Activated T-helper 1 cell treated with anti-CD3 and anti-CD28 coated beads, Interleukin-12 subunit alpha, Interleukin-12 subunit beta, Interleukin-2, Interleukin-4 antibody, amounts not matched to agents 30 ng/mL and 10 ng/mL and 1 ng/mL, durations not matched to agents 14 hours and 24 hours and 36 hours (primary cell): ENCODE measurements at regions of chr16 and their contacts with region 1.

Region 1: DNA sequence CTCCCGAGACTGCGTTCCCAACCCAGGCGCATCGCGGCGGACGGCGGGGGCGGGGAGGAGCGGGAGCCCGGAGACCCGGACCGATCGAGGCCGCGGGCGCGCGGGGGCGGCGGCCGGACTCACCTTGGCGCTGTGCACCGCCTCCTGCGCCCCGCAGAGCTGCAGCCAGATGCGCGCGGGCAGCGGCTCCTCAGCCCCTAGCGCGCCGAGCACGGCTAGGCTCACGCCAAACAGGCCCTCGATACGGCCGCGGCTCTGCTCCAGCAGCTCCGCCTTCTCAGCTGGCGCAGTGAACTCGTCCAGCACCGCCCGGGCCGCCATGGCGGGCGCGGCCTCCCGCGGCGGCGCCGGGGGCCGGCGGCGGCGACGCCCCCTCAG is 339 bp downstream of the N4BP1 start:
- DNase-seq: no peak
- H3K4me3 Mint-ChIP-seq: no peak overlapping the region
- H3K27ac Mint-ChIP-seq: peak overlapping the region; percentile 93
- H3K4me1 Mint-ChIP-seq: peaks cover 50% of the 10 kb centered on the region
- H3K27me3 Mint-ChIP-seq: no peaks in the 10 kb centered on the region

Region 2: DNA sequence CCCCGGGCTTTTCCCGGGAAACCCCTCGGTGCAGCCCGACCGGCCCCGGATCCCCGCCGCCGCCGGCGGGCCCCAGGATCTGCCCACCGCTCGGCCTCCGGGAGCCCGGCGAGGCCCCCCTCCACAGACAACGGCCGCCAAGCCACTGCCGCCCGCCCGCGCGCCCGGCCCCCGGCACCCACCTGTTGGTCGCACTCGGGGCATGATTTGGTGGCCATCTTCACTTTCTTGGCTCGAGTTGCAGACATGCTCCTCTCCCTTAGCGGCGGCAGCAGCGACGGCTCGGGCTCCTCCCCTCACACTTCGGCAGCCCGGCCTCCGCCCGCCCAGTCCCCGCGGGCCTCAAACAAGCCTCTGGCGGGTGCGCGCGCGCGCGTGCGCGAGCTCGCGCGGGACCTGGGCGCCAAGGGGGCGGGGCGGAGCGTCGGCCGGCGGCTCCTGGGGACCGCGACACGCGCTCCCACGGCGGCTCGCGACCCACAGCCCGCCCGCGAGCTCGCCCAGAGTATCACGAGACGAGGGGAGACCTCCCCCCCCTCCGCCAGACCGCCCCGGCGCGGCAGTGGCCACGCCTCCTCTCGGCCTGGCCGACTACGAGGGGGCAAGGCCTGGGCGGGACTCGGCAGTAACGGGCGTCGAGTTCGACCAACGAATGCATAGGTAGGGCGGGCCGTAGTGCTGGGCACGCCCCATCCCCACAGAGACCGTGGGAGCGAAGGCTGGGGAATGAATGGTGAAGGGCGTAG is 1778.6 kb before region 1 on chr16 and contains the start of gene C16orf87:
- intact Hi-C with region 1: loop called (anchors 2 kb)
- DNase-seq: peak; percentile 90
- H3K4me3 Mint-ChIP-seq: peak within 1 kb of the TSS; percentile 97
- H3K27ac Mint-ChIP-seq: peak within 1 kb of the TSS; percentile 98
- H3K4me1 Mint-ChIP-seq: peaks cover 40% of the 10 kb centered on the region
- H3K27me3 Mint-ChIP-seq: peaks cover 10% of the 10 kb centered on the region
- total RNA-seq, gene C16orf87: 40.8 and 44.5 TPM in 2 replicates

Region 3: DNA sequence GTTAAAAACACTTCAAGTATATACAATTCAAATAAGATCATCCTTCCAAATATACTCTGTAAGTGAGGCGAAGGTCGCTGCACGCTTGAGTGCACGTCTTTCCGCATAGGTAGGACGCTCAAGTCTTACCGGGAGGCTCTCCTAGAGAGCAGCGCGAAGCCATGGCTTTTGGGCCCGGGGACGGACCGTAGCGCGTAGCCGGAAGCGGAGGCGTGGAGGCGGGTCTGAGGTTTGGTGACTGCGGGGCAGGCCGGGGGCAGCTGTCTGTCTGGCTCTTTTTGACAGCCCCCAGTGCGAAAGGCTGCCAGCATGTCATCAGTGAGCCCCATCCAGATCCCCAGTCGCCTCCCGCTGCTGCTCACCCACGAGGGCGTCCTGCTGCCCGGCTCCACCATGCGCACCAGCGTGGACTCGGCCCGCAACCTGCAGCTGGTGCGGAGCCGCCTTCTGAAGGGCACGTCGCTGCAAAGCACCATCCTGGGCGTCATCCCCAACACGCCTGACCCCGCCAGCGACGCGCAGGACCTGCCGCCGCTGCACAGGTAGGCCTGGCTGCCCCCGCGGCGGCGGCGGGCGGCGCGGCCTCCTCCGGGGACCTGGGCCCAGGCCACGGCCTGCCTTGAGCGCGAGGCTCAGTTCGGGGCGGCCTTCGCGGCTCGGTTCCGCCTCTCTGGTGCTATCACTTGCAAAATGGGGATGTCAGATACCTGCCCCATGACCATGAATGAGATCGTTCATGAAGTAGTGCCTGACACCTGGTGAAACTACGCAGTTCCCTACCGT is 365.4 kb before region 1 on chr16 and contains the start of gene LONP2:
- intact Hi-C with region 1: loop called (anchors 2 kb)
- DNase-seq: peak; percentile 90
- H3K4me3 Mint-ChIP-seq: peak within 1 kb of the TSS; percentile 92
- H3K27ac Mint-ChIP-seq: peak within 1 kb of the TSS; percentile 93
- H3K4me1 Mint-ChIP-seq: peaks cover 27% of the 10 kb centered on the region
- H3K27me3 Mint-ChIP-seq: peaks cover 2% of the 10 kb centered on the region
- total RNA-seq, gene LONP2: 52.2 and 55.7 TPM in 2 replicates

Region 4: DNA sequence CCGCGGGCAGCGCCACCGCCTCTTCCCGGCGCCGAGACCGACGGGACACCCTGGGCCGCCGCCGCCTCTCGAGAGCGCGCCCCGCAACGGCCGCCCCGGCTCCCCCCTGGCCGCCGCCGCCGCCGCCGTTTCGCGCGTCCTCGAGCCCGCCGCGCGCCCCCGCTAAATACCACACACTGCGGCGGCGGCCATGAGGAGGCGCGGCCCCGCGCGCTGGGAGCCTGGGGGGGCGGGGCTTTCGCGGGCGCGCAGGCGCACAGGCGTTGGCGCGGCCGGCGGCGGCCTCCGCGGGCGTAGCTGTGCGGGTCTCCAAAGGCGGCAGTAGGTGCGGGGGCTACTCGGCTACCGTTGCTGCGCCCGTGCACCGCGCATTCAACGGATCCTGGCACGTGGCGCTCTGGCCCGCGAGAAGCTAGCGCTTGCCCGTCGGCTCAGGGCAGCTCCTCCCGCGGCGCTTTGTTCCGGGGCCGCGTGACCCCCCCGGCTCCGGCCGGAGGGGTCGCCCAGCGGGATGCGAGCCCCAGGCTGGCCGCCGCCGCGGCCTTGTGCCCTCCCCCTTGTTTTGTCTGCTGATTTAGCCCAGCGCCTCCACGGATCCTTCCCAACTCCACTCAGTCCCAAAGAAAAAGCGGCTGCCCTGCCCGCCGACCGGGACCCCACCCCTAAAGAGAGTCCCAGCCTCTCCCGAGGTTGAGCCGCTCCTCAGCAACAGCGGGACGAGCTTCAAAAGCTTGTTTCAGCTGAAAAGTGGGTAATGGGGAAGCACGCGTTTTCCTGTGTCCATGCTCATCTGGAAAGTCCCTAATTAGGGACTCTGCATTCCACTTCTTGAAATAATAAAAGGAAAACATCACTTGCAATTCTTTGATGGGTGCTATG is 224.1 kb before region 1 on chr16 and contains the start of gene SIAH1:
- intact Hi-C with region 1: loop called (anchors 1 kb)
- DNase-seq: peak; percentile 85
- H3K4me3 Mint-ChIP-seq: peak within 1 kb of the TSS; percentile 97
- H3K27ac Mint-ChIP-seq: peak within 1 kb of the TSS; percentile 95
- H3K4me1 Mint-ChIP-seq: peaks cover 29% of the 10 kb centered on the region
- H3K27me3 Mint-ChIP-seq: peaks cover 3% of the 10 kb centered on the region
- total RNA-seq, gene SIAH1: 15.6 and 16.8 TPM in 2 replicates

Region 5: DNA sequence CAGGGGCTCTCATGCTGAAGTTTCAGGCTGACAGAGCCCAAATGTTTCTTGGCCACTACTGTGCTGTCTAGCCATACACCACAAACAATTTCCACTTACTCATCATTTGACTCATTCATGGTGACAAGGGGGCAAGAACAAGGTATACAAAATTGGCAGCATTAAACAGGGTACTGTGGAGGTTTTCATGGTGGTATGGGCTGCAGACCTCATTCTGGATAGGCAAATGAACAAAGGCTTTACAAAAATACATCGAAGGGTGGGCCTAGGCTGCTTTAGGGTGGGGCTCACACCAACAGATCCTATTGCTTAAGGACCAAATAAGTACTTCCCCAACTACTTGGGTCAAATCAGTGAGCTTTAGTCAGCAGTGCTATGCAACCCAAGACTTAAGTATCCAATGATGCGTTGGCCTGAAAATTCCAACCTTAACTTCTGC is 52.7 kb before region 1 on chr16:
- intact Hi-C with region 1: loop called (anchors 1 kb)
- DNase-seq: peak; percentile 20
- H3K4me3 Mint-ChIP-seq: peak overlapping the region; percentile 62
- H3K27ac Mint-ChIP-seq: peak overlapping the region; percentile 92
- H3K4me1 Mint-ChIP-seq: peaks cover 86% of the 10 kb centered on the region
- H3K27me3 Mint-ChIP-seq: no peaks in the 10 kb centered on the region

Region 6: DNA sequence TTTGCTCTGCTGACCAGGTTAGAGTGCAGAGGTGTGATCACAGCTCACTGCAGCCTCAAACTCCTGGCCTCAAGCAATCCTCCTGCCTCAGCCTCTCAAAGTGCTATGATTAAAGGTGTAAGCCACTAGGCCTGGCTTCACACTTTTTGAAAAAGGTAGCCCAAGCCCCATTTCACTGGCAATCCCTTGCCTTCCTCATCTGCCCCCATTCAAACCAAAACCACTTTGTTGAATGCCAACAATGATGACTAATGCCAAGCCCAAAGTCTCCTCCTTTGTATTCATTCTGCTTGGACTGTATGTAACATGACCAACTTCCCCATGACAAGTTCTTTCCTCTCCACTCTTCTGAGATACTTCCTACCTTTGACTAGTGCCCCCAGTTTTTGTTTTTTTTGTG is 32.7 kb before region 1 on chr16:
- intact Hi-C with region 1: loop called (anchors 1 kb)
- DNase-seq: no peak
- H3K4me3 Mint-ChIP-seq: peak overlapping the region; percentile 38
- H3K27ac Mint-ChIP-seq: peak overlapping the region; percentile 84
- H3K4me1 Mint-ChIP-seq: peaks cover 68% of the 10 kb centered on the region
- H3K27me3 Mint-ChIP-seq: no peaks in the 10 kb centered on the region

Region 7: GRCh38 chr16:48623304-48624016 is 13.8 kb after region 1 on chr16:
- intact Hi-C with region 1: loop called (anchors 1 kb)
- DNase-seq: peak; percentile 77
- H3K4me3 Mint-ChIP-seq: peak overlapping the region; percentile 81
- H3K27ac Mint-ChIP-seq: peak overlapping the region; percentile 72
- H3K4me1 Mint-ChIP-seq: peaks cover 42% of the 10 kb centered on the region
- H3K27me3 Mint-ChIP-seq: peaks cover 8% of the 10 kb centered on the region